Caco-2 (cell line): ENCODE measurements at regions of chr7 and their contacts with region 1.

Region 1: GRCh38 chr7:85681241-85681640 is 494.4 kb upstream of the SEMA3D start:
- DNase-seq: no peak
- H3K4me3 ChIP-seq: no peak overlapping the region
- H3K4me3 Mint-ChIP-seq: no peak overlapping the region
- H3K27ac Mint-ChIP-seq: no peak overlapping the region
- H3K4me1 ChIP-seq: no peaks in the 10 kb centered on the region
- H3K4me1 Mint-ChIP-seq: no peaks in the 10 kb centered on the region
- H3K27me3 ChIP-seq: no peaks in the 10 kb centered on the region
- H3K27me3 Mint-ChIP-seq: no peaks in the 10 kb centered on the region
- CTCF ChIP-seq: no peak

Region 2: DNA sequence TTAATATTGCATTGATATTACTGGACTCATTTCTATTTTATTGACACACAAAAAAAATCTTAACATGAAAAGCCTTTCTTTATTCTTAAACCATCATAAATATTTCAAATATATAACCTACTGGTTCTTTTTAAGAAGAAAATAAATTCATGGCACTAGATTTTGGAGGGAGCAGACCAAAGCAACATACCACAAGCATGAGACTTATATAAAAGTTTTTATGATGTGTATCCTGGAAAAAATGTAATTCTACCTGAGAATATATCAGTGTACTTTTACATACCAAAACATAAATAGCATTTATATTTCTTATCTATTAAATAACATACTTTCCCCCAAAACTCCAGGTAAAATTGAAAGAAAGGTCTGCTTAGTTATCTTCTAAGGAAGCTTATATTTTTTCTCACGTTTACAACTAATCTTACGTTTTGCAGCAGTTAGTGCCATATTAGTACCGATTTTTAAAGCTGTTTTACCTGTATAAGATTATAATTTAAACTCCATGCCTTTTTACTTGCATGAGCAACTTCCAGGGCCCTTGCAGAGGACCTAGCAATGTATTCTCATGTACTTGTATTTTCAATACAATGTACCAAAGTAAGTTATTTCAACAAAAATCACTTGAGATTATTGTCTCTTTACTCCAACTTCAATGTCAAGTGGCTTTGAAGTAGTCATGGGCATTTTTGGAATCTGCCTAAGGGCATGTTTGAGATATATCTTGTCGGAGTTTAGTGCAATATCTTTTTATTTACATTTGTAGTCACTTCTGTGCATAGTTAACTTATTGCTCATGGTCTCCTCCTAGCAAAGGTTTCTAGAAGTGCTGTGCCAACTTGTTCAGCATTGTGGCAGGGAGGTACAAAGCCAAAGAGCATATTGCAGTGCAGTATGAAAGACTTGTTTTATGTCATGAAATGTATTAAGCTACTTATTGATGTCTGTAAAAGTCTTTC is 14.1 kb after region 1 on chr7:
- CTCF ChIA-PET with region 1: no interaction called
- POLR2A ChIA-PET with region 1: no interaction called
- intact Hi-C with region 1: loop called (anchors 1 kb)
- DNase-seq: peak in 1 of 2 experiments; percentile 16
- H3K4me3 ChIP-seq: no peak overlapping the region
- H3K4me3 Mint-ChIP-seq: no peak overlapping the region
- H3K27ac Mint-ChIP-seq: no peak overlapping the region
- H3K4me1 ChIP-seq: peaks cover 7% of the 10 kb centered on the region; the same call in 1 of the 2 replicates
- H3K4me1 Mint-ChIP-seq: peaks cover 7% of the 10 kb centered on the region
- H3K27me3 ChIP-seq: no peaks in the 10 kb centered on the region
- H3K27me3 Mint-ChIP-seq: no peaks in the 10 kb centered on the region
- CTCF ChIP-seq: no peak